ENCODE measurements at regions of chr17 and their contacts with region 1.

Region 1: GRCh38 chr17:7072406-7072805 is 7.6 kb downstream of the CLEC10A start:
- DNase-seq: no peak

Region 2: DNA sequence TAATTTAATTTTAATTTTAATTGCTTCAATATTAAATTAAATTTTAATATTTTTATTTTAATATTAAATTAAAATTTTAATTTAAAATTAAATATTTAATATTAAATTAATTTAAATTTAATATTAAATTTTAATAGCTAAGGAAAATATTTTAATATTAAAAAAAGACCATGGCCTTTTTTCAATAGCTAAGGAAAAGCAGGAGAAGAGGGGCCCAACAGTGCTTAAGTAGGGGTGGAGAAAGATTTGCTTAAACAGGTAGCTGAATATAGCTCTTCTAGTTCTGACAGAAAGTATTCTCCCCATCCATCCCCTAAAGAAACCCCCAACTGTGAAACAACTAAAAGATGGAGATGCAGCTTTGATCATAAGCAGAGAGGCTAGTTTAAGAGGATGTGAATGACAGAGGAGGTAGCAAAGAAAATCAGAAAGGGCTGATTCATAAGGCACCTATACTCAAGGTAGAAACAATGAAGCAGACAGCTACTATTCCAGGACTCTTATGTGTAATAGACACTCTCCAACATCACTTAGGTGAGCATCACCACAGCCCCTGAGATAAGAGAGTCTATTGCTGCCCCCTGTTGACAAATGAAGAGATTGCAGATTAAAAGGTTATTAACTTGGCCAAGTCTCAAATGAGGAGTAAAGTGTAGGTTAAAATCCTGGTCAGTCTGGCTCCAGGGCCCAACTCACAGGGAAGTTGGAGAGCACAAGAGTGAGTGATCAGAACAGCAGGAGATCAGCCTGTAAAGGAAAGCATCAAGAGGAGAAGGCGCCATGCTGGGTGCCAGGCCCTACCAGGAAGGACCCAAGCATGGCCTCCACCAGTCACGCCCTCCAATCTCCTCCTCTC is 67.8 kb before region 1 on chr17:
- in situ Hi-C with region 1: no loop called
- DNase-seq: peak; percentile 76

Region 3: DNA sequence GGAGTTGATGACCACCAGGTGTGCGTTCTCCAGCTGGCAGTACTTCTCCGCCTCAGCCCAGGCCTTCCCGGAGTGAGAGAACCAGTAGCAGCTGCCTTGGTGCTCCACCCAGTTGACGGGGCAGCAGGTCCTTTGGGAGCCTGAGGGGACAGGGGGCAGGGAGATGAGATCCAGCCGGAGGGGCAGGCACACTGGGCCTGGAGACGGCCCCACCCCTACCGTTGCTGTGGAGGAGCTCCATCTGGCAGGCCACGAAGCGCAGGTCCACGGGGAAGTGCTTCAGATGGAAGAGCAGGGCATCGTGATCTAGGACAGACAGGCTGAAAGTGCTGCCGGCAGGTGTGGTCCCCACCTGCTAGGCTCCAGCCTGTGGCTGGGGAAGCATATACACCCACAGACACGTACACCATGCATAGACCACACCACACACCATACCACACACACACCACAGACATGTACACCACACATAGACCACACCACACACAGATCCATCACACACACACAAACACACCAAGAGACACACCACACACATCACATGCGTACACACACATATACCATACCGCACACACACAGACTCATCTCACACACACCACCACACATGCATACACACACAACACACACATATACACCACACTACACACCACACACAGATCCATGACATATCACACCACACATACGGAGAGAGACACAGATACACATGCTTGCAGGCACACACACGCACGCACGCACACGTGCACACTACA is 34.8 kb after region 1 on chr17:
- in situ Hi-C with region 1: loop called (anchors 5 kb)
- DNase-seq: no peak

Region 4: GRCh38 chr17:7166873-7167272 is 94.5 kb after region 1 on chr17:
- in situ Hi-C with region 1: no loop called
- DNase-seq: no peak

Measured in G401 (cell line).